Adrenal gland (tissue), 19 donors: ENCODE measurements at regions of chr11 and their contacts with region 1.

Region 1: GRCh38 chr11:47373876-47374720 is 4.2 kb downstream of the SPI1 start:
- DNase-seq: peak; percentile 81 to 92 (median 88)
- H3K4me3 ChIP-seq: no peak overlapping the region
- H3K27ac ChIP-seq: peak overlapping the region in 1 of 5 donors; percentile 58
- H3K4me1 ChIP-seq: peaks cover 3 to 6% of the 10 kb centered on the region in 2 donors
- H3K27me3 ChIP-seq: no peaks in the 10 kb centered on the region
- CTCF ChIP-seq: peak; percentile 85 to 97 (median 94)
- POLR2A ChIP-seq: no peak

Region 2: GRCh38 chr11:47010179-47010578 is 363.9 kb before region 1 on chr11:
- intact Hi-C with region 1: no loop called
- DNase-seq: no peak
- H3K4me3 ChIP-seq: no peak overlapping the region
- H3K27ac ChIP-seq: no peak overlapping the region
- H3K4me1 ChIP-seq: peaks cover 1 to 3% of the 10 kb centered on the region in 2 donors
- H3K27me3 ChIP-seq: no peaks in the 10 kb centered on the region
- CTCF ChIP-seq: no peak
- POLR2A ChIP-seq: no peak

Region 3: GRCh38 chr11:47411884-47412746 is 38.0 kb after region 1 on chr11:
- intact Hi-C with region 1: loop called (anchors 5 kb)
- DNase-seq: peak in 6 of 7 donors; percentile 59 to 74 (median 70)
- H3K4me3 ChIP-seq: no peak overlapping the region
- H3K27ac ChIP-seq: peak overlapping the region in 2 of 5 donors; percentile 54 to 59
- H3K4me1 ChIP-seq: peaks cover 16 to 36% of the 10 kb centered on the region in 2 donors
- H3K27me3 ChIP-seq: no peaks in the 10 kb centered on the region
- CTCF ChIP-seq: peak; percentile 48 to 74 (median 68)
- POLR2A ChIP-seq: no peak

Region 4: GRCh38 chr11:47454180-47454644 is 80.1 kb after region 1 on chr11:
- intact Hi-C with region 1: loop called (anchors 5 kb)
- DNase-seq: peak; percentile 79 to 93 (median 88)
- H3K4me3 ChIP-seq: no peak overlapping the region
- H3K27ac ChIP-seq: no peak overlapping the region
- H3K4me1 ChIP-seq: peaks cover 0 to 3% of the 10 kb centered on the region in 2 donors
- H3K27me3 ChIP-seq: no peaks in the 10 kb centered on the region
- CTCF ChIP-seq: peak; percentile 67 to 97 (median 82)
- POLR2A ChIP-seq: no peak